ENCODE measurements at regions of chr19 and their contacts with region 1.

Region 1: GRCh38 chr19:1279782-1280341 is 4.5 kb downstream of the FAM174C start:
- DNase-seq: peak; percentile 82 to 86 (median 83)
- ATAC-seq: peak; percentile 31
- H3K4me3 ChIP-seq: no peak overlapping the region
- H3K27ac ChIP-seq: no peak overlapping the region
- H3K4me1 ChIP-seq: peaks cover 17% of the 10 kb centered on the region
- H3K27me3 ChIP-seq: peaks cover 0 to under 1% of the 10 kb centered on the region in 2 donors
- CTCF ChIP-seq: peak; percentile 85 to 96 (median 90)
- POLR2A ChIP-seq: no peak

Region 2: GRCh38 chr19:1315470-1316231 is 35.8 kb after region 1 on chr19:
- intact Hi-C with region 1: no loop called
- DNase-seq: peak; percentile 33 to 65 (median 52)
- ATAC-seq: peak; percentile 71
- H3K4me3 ChIP-seq: no peak overlapping the region
- H3K27ac ChIP-seq: no peak overlapping the region
- H3K4me1 ChIP-seq: peaks cover 10% of the 10 kb centered on the region
- H3K27me3 ChIP-seq: peaks cover 0 to 8% of the 10 kb centered on the region in 2 donors
- CTCF ChIP-seq: peak; percentile 49 to 76 (median 54)
- POLR2A ChIP-seq: no peak

Region 3: GRCh38 chr19:1513499-1514294 is 233.8 kb after region 1 on chr19:
- intact Hi-C with region 1: loop called (anchors 10 kb)
- DNase-seq: peak; percentile 40 to 60 (median 47)
- ATAC-seq: peak; percentile 63
- H3K4me3 ChIP-seq: no peak overlapping the region
- H3K27ac ChIP-seq: no peak overlapping the region
- H3K4me1 ChIP-seq: peaks cover 13% of the 10 kb centered on the region
- H3K27me3 ChIP-seq: peaks cover 0 to 21% of the 10 kb centered on the region in 2 donors
- CTCF ChIP-seq: peak; percentile 45 to 70 (median 49)
- POLR2A ChIP-seq: no peak

Measured in body of pancreas (tissue), 4 donors.